Endothelial cell of umbilical vein (primary cell): ENCODE measurements at regions of chr1 and their contacts with region 1.

Region 1: DNA sequence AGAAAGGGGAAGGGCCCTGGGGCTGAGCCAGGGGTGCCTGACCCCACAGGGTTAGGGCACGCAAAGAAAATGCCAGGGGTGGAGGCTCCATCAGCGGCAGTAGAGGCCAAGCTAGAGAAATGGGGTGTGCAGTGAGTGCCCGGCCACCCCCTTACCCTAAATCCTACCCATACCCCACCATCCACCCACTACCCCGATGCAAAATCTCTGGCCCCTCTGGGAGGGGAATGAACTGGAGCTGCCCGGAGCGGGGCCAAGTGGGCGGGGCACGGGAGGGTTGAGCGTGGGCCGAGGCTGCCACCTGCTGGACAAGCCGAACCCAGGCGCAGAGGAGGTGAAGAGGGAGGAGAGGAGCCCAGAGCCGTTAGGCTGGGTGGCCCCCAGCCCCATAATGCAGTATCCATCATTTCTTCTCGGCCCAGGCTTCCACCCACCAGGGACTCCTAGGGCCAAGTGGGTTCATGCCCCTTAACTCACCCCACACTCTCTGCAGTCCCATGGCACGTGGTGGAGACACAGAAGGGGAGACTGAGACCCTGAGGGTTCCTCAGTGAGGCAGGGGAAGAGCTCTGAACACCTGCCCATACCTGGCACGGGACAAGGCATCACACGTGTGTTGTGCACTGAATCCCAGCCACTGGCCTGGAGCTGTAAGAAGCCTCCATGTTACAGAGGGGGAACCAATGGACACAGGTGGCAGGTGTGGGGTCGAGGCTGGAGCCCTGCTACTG is 1.4 kb upstream of the C1QC start:
- DNase-seq: peak; percentile 43
- H3K4me3 ChIP-seq: no peak overlapping the region
- H3K27ac ChIP-seq: no peak overlapping the region
- H3K4me1 ChIP-seq: no peaks in the 10 kb centered on the region
- H3K27me3 ChIP-seq: no peaks in the 10 kb centered on the region
- CTCF ChIP-seq: peak; percentile 85 to 94
- POLR2A ChIP-seq: no peak

Region 2: DNA sequence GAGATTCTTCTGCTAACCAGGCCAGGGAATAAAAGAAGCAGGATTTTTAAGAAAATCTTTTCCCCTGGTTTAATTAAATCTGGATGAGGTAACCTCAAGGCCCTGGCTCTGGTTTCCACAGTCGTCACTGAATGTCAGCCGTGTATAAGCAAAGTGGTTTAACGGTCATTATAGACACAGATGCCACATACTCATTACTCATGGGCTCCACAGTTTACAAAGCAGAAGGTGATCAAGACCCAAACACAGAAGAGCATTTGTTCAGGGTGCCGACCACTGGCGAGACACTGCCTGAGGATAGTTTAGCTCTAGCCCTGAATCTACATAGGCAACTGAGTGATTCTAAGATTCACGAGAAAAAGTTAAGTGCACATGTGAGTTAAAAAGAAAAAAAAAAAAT is 945.1 kb before region 1 on chr1:
- CTCF ChIA-PET with region 1: no interaction called
- POLR2A ChIA-PET with region 1: no interaction called
- dilution Hi-C with region 1: no loop called
- intact Hi-C with region 1: loop called (anchors 5 kb)
- DNase-seq: no peak
- H3K4me3 ChIP-seq: no peak overlapping the region
- H3K27ac ChIP-seq: no peak overlapping the region
- H3K4me1 ChIP-seq: no peaks in the 10 kb centered on the region
- H3K27me3 ChIP-seq: no peaks in the 10 kb centered on the region
- CTCF ChIP-seq: no peak
- POLR2A ChIP-seq: no peak

Region 3: GRCh38 chr1:22529901-22530621 is 112.0 kb before region 1 on chr1:
- CTCF ChIA-PET with region 1: interaction called, 11 read pairs
- POLR2A ChIA-PET with region 1: no interaction called
- dilution Hi-C with region 1: no loop called
- intact Hi-C with region 1: no loop called
- DNase-seq: peak; percentile 20
- H3K4me3 ChIP-seq: no peak overlapping the region
- H3K27ac ChIP-seq: no peak overlapping the region
- H3K4me1 ChIP-seq: peaks cover 6% of the 10 kb centered on the region
- H3K27me3 ChIP-seq: no peaks in the 10 kb centered on the region
- CTCF ChIP-seq: no peak
- POLR2A ChIP-seq: no peak